A673 (cell line): ENCODE measurements at regions of chr7 and their contacts with region 1.

Region 1: GRCh38 chr7:36366718-36367560 is 22.7 kb upstream of the ANLN start:
- DNase-seq: peak; percentile 95
- H3K4me3 ChIP-seq: peak overlapping the region; percentile 94
- H3K27ac ChIP-seq: peak overlapping the region; percentile 79
- H3K4me1 ChIP-seq: peaks cover 4% of the 10 kb centered on the region
- H3K27me3 ChIP-seq: no peaks in the 10 kb centered on the region
- CTCF ChIP-seq: peak; percentile 94

Region 2: GRCh38 chr7:36389371-36390198 is 22.6 kb after region 1 on chr7 and contains the start of gene ANLN:
- CTCF ChIA-PET with region 1: no interaction called
- POLR2A ChIA-PET with region 1: no interaction called
- intact Hi-C with region 1: loop called (anchors 1 kb)
- DNase-seq: peak; percentile 98
- H3K4me3 ChIP-seq: peak within 1 kb of the TSS; percentile 91
- H3K27ac ChIP-seq: peak within 1 kb of the TSS; percentile 95
- H3K4me1 ChIP-seq: peaks cover 13% of the 10 kb centered on the region
- H3K27me3 ChIP-seq: no peaks in the 10 kb centered on the region
- CTCF ChIP-seq: no peak
- total RNA-seq, gene ANLN: 143 and 164 TPM in 2 replicates